PC-3 (cell line): ENCODE measurements at regions of chr13 and their contacts with region 1.

Region 1: DNA sequence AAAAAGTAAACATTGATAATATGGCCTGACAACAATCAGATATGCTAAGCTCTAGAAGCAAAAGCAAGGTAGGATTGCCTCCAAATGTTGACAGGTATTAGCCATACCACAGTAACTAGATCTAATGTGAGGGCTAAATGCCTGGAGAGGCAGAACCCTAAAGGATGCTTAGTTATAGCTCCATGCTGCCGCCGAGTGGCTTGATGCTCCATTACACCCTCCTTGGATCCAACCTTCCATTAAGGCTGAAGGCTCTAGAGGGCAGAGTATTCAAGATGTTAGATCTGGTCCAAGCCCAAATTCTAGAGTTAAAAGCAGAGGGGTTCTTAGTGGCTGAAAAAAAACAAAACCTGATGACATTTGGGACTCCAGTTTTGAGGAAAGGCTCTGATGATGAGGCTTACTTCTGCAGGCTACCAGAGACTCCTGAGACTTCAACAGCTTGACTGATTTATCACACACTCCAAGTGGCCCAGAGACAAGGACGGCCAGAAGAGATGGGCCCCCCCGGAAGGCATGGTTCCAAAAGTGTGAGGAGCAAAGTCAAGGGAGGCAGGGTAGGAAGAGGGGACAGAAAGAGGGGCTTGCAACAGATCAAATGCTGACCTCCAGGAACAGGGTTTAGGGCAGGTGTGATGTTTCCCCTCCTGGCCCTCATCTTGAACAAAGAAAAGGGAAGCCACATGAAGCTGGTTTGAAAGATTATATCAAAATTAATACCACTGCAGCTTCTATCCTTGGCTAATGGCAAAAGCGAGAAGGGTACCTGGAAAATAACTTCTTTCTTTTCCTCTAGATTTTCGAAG is 21.9 kb upstream of the CPB2 start:
- DNase-seq: peak; percentile 81
- ATAC-seq: peak; percentile 95
- H3K4me3 ChIP-seq: no peak overlapping the region
- H3K27ac ChIP-seq: no peak overlapping the region
- H3K4me1 ChIP-seq: no peaks in the 10 kb centered on the region
- H3K27me3 ChIP-seq: no peaks in the 10 kb centered on the region
- CTCF ChIP-seq: peak; percentile 83

Region 2: DNA sequence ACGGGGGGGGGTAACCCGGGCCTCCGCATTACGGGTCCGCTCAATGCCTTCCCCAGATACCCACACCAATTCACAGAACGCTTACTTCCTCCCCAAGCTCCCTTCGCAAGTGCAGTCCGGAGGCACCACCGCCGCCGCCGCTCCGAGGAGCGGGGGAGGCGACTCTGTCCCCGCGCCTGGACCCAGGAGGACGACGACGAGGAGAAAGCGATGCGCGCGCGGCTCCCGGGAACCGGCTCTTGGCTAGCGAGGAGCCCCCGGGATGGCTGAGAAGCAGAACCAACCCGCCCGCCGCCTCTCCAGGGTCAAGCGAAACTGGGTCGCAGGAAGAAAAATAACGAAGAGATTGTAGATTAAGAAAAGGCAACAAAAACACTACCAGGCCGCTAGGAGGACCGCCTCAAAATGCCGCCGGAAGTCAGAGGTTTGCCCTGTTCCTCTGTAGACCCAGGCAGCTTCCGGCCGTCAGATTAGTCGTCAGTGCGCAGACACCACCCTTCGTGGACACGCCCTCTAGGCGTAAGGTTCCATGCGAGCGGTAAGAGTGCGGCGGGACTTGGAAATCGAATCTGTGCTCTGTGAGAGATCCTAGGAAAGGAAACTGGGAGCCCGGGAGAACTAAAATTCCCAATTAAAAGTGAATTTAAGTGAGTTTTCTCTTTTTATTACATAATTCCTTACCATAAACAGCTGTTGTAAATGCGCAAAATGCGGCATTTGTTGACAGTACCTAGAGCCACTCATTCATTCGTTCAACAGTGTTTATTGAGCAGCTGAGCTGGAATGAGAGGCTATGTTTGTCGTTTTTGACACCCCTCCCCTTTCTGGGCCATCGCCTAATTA is 74.2 kb before region 1 on chr13 and contains the start of gene ZC3H13:
- CTCF ChIA-PET with region 1: no interaction called
- POLR2A ChIA-PET with region 1: no interaction called
- intact Hi-C with region 1: loop called (anchors 5 kb)
- DNase-seq: peak; percentile 92
- ATAC-seq: peak; percentile 99
- H3K4me3 ChIP-seq: peak within 1 kb of the TSS; percentile 98
- H3K27ac ChIP-seq: peak within 1 kb of the TSS; percentile 45; the same call in 1 of the 2 replicates
- H3K4me1 ChIP-seq: peaks cover 18% of the 10 kb centered on the region; the same call in 1 of the 2 replicates
- H3K27me3 ChIP-seq: no peaks in the 10 kb centered on the region
- CTCF ChIP-seq: peak; percentile 28; the same call in 1 of the 2 replicates
- total RNA-seq, gene ZC3H13: 9.5 and 14.0 TPM in 2 replicates

Region 3: GRCh38 chr13:46160471-46161066 is 33.8 kb after region 1 on chr13:
- CTCF ChIA-PET with region 1: interaction called, 12 read pairs
- POLR2A ChIA-PET with region 1: no interaction called
- intact Hi-C with region 1: no loop called
- DNase-seq: peak; percentile 57
- ATAC-seq: peak; percentile 70
- H3K4me3 ChIP-seq: no peak overlapping the region
- H3K27ac ChIP-seq: no peak overlapping the region
- H3K4me1 ChIP-seq: no peaks in the 10 kb centered on the region
- H3K27me3 ChIP-seq: no peaks in the 10 kb centered on the region
- CTCF ChIP-seq: peak; percentile 77

Region 4: DNA sequence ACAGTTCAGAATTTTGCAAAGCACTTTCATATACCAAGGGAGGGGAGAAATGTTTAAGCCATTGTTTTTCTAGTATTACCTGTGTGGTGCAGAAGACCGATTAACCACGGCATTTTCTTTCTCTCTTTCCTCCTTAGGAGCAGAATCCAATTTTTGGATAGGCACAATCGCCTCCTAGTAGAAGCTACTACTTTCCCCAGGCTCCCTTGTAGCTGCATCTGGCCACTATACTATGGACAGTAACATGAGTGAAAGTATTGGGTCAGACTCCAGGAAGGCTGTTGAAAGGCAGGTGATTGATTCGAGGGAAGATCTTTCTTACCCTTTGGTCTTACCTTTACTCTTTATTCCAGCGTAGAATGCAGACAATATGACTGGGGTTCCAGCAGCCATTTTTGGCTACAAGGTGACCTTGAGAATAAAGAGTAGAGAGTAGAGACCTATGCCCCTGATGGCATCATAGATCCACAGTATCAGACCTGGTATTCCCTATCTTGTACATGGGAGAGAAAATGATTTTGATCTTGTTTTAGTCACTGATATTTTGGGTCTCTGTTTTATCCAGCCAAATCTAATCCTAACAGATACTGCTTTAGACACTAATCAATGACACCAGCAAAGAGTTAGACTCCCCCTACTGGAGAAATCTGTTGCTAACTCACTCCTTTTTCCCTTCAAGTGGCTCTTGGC is 162.0 kb after region 1 on chr13:
- CTCF ChIA-PET with region 1: no interaction called
- POLR2A ChIA-PET with region 1: no interaction called
- intact Hi-C with region 1: loop called (anchors 1 kb)
- DNase-seq: peak; percentile 66
- ATAC-seq: peak; percentile 76
- H3K4me3 ChIP-seq: no peak overlapping the region
- H3K27ac ChIP-seq: no peak overlapping the region
- H3K4me1 ChIP-seq: no peaks in the 10 kb centered on the region
- H3K27me3 ChIP-seq: no peaks in the 10 kb centered on the region
- CTCF ChIP-seq: peak; percentile 81

Region 5: GRCh38 chr13:46321494-46322225 is 194.9 kb after region 1 on chr13:
- CTCF ChIA-PET with region 1: no interaction called
- POLR2A ChIA-PET with region 1: no interaction called
- intact Hi-C with region 1: loop called (anchors 1 kb)
- DNase-seq: peak; percentile 59
- ATAC-seq: peak; percentile 55
- H3K4me3 ChIP-seq: no peak overlapping the region
- H3K27ac ChIP-seq: no peak overlapping the region
- H3K4me1 ChIP-seq: no peaks in the 10 kb centered on the region
- H3K27me3 ChIP-seq: 0 out of 2 replicates have a peak, but pooled peaks cover 2% of the 10 kb centered on the region
- CTCF ChIP-seq: peak; percentile 81